WTC11 (cell line): ENCODE measurements at regions of chr1 and their contacts with region 1.

Region 1: DNA sequence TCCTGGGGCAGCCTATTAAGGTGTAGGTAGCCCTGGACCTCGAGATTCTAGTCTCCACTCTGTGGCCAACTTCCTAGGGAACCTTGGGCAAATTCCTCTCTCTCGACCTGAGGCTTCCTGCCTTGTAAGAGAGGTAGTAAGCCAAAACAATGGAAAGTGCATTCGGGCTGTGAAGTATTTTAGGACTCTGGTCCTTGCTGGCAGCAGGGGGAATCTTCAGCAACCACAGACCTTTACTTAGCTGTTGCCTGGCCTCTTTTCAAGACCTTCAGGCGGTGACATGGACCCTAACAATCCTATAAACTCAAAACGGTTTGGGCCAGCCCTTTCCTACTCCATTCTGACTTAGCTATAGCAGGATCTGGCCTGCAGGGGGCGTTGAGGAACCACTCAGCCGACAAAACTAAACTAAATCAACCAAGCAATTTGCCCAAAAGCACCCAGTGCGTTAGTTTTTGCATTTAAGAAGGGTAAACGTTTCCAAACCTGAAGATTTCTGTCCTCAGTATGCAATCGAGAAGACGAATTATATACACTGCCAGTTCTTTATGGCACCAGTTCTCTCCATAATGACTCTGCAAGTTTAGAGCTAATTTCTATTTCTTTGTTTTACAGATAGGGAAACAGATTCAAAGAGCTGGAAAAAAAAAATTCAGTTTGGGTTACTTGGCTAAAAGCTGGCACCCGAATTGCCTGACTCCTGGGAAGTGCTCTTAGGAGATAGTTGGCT is 10.9 kb upstream of the SESN2 start:
- DNase-seq: peak; percentile 85
- ATAC-seq: peak; percentile 53
- H3K4me3 Mint-ChIP-seq: peak overlapping the region; percentile 68
- H3K27ac Mint-ChIP-seq: peak overlapping the region; percentile 96
- H3K4me1 Mint-ChIP-seq: peaks cover 34% of the 10 kb centered on the region
- H3K27me3 Mint-ChIP-seq: no peaks in the 10 kb centered on the region
- CTCF ChIP-seq: peak; percentile 95

Region 2: GRCh38 chr1:28064064-28064463 is 184.4 kb before region 1 on chr1:
- CTCF ChIA-PET with region 1: no interaction called
- POLR2A ChIA-PET with region 1: no interaction called
- DNase-seq: no peak
- ATAC-seq: no peak
- H3K4me3 Mint-ChIP-seq: no peak overlapping the region
- H3K27ac Mint-ChIP-seq: no peak overlapping the region
- H3K4me1 Mint-ChIP-seq: peaks cover 3% of the 10 kb centered on the region
- H3K27me3 Mint-ChIP-seq: no peaks in the 10 kb centered on the region
- CTCF ChIP-seq: no peak

Region 3: GRCh38 chr1:28213315-28213714 is 35.1 kb before region 1 on chr1:
- CTCF ChIA-PET with region 1: no interaction called
- POLR2A ChIA-PET with region 1: no interaction called
- DNase-seq: no peak
- ATAC-seq: no peak
- H3K4me3 Mint-ChIP-seq: no peak overlapping the region
- H3K27ac Mint-ChIP-seq: no peak overlapping the region
- H3K4me1 Mint-ChIP-seq: peaks cover 6% of the 10 kb centered on the region
- H3K27me3 Mint-ChIP-seq: no peaks in the 10 kb centered on the region
- CTCF ChIP-seq: no peak

Region 4: DNA sequence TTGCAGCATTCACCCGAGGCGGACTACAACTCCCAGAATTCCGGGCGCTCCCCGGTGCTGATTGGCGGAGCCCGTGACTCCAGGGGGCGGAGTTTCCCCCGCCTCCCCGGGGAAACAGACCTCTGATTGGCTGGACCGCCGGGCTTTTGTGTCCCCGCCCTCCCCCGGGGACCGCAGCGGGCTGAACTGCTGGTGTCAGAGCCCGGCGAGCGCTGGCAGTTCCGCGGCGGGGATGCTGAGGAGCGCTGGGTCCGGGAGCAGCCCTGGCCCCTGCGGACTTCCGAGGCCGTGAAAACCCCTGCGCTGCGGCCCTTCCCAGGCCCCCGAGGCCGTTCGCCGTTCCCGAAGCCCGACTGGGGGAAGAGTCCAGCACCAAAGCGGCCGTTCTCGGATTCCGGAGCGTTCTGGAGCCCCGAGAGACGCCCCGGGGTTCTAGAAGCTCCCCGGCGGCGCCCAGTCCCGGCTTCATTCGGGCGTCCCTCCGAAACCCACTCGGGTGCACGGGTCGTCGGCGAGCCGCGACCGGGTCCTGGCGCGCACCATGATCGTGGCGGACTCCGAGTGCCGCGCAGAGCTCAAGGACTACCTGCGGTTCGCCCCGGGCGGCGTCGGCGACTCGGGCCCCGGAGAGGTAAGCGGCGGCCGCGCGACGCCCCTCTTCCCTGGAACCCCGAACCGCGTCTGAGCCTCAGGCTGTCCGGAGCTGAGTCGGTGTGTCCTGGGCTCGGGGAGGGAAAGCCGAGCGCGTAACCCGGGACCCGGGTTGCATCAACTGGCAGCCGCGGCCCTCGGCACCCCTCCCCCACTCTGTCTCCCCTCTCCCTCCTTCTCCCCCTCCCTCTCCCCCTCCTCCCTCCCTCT is 11.1 kb after region 1 on chr1 and contains the start of gene SESN2:
- CTCF ChIA-PET with region 1: interaction called, 79 read pairs
- POLR2A ChIA-PET with region 1: interaction called, 20 read pairs
- DNase-seq: peak; percentile 100
- ATAC-seq: peak; percentile 86
- H3K4me3 Mint-ChIP-seq: peak within 1 kb of the TSS; percentile 79
- H3K27ac Mint-ChIP-seq: peak within 1 kb of the TSS; percentile 49; the same call in 1 of the 2 replicates
- H3K4me1 Mint-ChIP-seq: peaks cover 33% of the 10 kb centered on the region
- H3K27me3 Mint-ChIP-seq: no peaks in the 10 kb centered on the region; the same call in 1 of the 2 replicates
- CTCF ChIP-seq: no peak
- total RNA-seq, gene SESN2: 22.3 to 38.1 TPM (median 23.3 TPM) in 3 replicates

Region 5: GRCh38 chr1:28280501-28280900 is 32.1 kb after region 1 on chr1:
- CTCF ChIA-PET with region 1: interaction called, 18 read pairs
- POLR2A ChIA-PET with region 1: interaction called, 6 read pairs
- DNase-seq: no peak
- ATAC-seq: no peak
- H3K4me3 Mint-ChIP-seq: no peak overlapping the region
- H3K27ac Mint-ChIP-seq: no peak overlapping the region
- H3K4me1 Mint-ChIP-seq: no peaks in the 10 kb centered on the region
- H3K27me3 Mint-ChIP-seq: no peaks in the 10 kb centered on the region
- CTCF ChIP-seq: no peak

Region 6: GRCh38 chr1:28313710-28314546 is 65.5 kb after region 1 on chr1:
- CTCF ChIA-PET with region 1: interaction called, 19 read pairs
- POLR2A ChIA-PET with region 1: no interaction called
- DNase-seq: no peak
- ATAC-seq: no peak
- H3K4me3 Mint-ChIP-seq: no peak overlapping the region
- H3K27ac Mint-ChIP-seq: no peak overlapping the region
- H3K4me1 Mint-ChIP-seq: no peaks in the 10 kb centered on the region
- H3K27me3 Mint-ChIP-seq: no peaks in the 10 kb centered on the region
- CTCF ChIP-seq: no peak

Region 7: GRCh38 chr1:28340221-28340974 is 92.0 kb after region 1 on chr1:
- CTCF ChIA-PET with region 1: interaction called, 10 read pairs
- POLR2A ChIA-PET with region 1: interaction called, 3 read pairs
- DNase-seq: no peak
- ATAC-seq: no peak
- H3K4me3 Mint-ChIP-seq: no peak overlapping the region
- H3K27ac Mint-ChIP-seq: no peak overlapping the region
- H3K4me1 Mint-ChIP-seq: no peaks in the 10 kb centered on the region
- H3K27me3 Mint-ChIP-seq: no peaks in the 10 kb centered on the region
- CTCF ChIP-seq: no peak

Region 8: DNA sequence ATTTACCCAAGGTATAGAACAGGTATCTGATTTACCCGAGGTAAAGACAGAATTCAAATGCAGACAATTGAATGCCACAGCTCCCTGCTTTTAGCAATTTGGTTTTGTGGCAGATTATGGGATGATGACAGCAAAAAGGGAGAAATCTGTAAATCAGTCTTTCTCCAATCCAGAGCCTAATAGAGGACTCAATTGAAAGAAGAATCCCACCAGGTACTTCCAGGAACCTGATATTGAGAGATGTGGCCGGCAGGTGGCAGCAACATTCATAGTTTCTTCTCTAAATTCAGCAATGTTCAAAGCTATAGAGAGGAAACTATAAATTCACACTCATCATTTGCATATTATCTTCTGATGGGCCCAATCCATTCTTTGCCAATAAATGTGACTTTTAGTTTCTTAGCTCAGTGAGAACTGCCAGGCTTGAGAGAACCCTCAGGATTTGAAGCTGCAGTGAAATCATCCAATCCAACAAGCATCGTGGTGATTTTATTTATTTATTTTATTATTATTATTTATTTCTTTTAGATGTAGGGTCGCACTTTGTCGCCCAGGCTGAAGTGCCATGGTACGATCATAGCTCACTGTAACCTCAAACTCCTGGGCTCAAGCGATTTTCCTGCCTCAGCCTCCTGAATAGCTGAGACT is 111.3 kb after region 1 on chr1:
- CTCF ChIA-PET with region 1: interaction called, 16 read pairs
- POLR2A ChIA-PET with region 1: no interaction called
- DNase-seq: peak; percentile 77
- ATAC-seq: peak; percentile 73
- H3K4me3 Mint-ChIP-seq: no peak overlapping the region
- H3K27ac Mint-ChIP-seq: no peak overlapping the region
- H3K4me1 Mint-ChIP-seq: no peaks in the 10 kb centered on the region
- H3K27me3 Mint-ChIP-seq: no peaks in the 10 kb centered on the region
- CTCF ChIP-seq: peak; percentile 52